ENCODE measurements at regions of chr5 and their contacts with region 1.

Region 1: DNA sequence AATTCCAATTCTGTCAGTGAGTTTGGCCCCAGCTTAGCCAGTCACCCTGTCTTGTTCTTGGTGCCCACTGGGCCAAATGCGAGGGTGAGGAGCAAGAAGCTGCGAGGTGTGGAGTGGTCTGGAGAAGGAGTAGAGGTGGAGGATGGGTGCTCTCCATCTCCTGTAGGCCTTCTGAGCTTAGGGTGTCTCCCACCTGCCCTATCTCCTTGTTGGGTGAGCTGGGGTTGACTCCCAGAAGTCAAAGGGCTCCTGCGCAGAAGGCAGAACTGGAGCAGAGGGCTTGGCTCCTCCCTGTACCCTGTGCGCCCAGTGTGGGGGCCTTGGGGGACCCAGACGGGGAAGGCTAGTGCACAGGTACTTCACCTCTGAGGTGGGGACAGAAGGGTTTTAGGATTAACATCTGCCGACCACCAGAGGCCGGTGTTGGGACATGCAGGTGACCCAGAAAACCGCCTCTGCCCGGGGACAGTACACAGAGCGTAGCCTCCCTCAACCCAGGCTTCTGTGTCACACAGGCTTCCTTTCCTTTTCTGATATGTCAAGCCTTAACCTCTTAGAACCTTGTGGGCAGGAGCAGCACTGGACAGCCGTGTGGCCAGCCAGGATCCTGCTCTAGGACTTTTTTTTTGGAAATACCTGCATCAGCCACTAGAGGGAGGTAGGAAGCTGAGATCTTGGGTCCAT is 16.9 kb downstream of the IL5 start:
- H3K4me3 ChIP-seq: peak overlapping the region; percentile 32
- H3K27ac ChIP-seq: no peak overlapping the region
- H3K4me1 ChIP-seq: no peaks in the 10 kb centered on the region
- CTCF ChIP-seq: peak; percentile 91

Region 2: GRCh38 chr5:132497488-132497997 is 28.9 kb before region 1 on chr5:
- CTCF ChIA-PET with region 1: no interaction called
- POLR2A ChIA-PET with region 1: no interaction called
- H3K4me3 ChIP-seq: no peak overlapping the region
- H3K27ac ChIP-seq: no peak overlapping the region; the same call in 1 of the 2 replicates
- H3K4me1 ChIP-seq: peaks cover 4% of the 10 kb centered on the region
- CTCF ChIP-seq: no peak

Region 3: DNA sequence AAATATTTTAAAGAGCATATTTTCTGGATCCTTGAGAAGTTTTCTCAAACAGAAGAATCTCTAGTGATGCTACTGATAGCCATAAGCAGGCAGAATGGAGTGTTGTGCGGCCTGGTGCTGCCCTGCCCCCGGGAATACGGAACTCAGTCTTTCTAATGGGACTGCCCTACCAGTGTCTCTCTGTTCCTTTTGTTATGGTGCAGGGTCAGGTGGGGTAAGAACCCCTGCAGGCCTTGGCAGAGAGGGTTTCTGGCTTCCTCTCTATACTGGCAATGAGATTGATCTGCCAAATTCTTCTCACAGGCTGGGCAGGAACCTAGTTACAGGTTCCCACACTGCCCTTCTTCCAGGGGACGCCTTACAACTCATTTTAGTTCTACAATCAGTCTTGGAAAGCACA is 14.3 kb after region 1 on chr5:
- CTCF ChIA-PET with region 1: interaction called, 20 read pairs
- POLR2A ChIA-PET with region 1: no interaction called
- H3K4me3 ChIP-seq: no peak overlapping the region
- H3K27ac ChIP-seq: no peak overlapping the region
- H3K4me1 ChIP-seq: no peaks in the 10 kb centered on the region
- CTCF ChIP-seq: no peak

Region 4: GRCh38 chr5:132546108-132546507 is 19.7 kb after region 1 on chr5:
- CTCF ChIA-PET with region 1: interaction called, 17 read pairs
- POLR2A ChIA-PET with region 1: no interaction called
- H3K4me3 ChIP-seq: no peak overlapping the region
- H3K27ac ChIP-seq: no peak overlapping the region
- H3K4me1 ChIP-seq: no peaks in the 10 kb centered on the region
- CTCF ChIP-seq: no peak

Region 5: GRCh38 chr5:132591145-132591544 is 64.7 kb after region 1 on chr5:
- CTCF ChIA-PET with region 1: interaction called, 10 read pairs
- POLR2A ChIA-PET with region 1: no interaction called
- H3K4me3 ChIP-seq: no peak overlapping the region
- H3K27ac ChIP-seq: no peak overlapping the region
- H3K4me1 ChIP-seq: no peaks in the 10 kb centered on the region
- CTCF ChIP-seq: no peak

Region 6: DNA sequence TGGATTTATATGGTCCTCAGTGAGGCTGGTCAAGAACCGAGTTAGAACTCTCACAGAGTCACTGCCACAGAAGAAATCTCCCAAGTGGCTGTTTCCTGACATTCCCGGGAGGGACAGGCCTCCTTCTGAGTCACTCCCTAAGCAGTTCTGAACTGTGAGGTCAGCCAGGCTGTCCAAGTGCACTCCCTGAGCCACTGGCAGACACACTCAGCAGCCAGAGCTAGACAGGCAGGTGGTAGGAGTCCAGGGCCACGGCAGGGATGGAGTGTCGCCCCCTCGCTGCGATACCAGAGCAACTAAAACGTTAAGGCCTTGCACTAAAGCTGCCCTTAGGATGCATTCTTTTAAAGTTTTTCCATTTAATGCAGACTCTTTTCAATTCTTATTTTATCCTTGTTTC is 150.8 kb after region 1 on chr5:
- CTCF ChIA-PET with region 1: interaction called, 14 read pairs
- POLR2A ChIA-PET with region 1: no interaction called
- H3K4me3 ChIP-seq: no peak overlapping the region
- H3K27ac ChIP-seq: no peak overlapping the region
- H3K4me1 ChIP-seq: no peaks in the 10 kb centered on the region
- CTCF ChIP-seq: no peak

Region 7: DNA sequence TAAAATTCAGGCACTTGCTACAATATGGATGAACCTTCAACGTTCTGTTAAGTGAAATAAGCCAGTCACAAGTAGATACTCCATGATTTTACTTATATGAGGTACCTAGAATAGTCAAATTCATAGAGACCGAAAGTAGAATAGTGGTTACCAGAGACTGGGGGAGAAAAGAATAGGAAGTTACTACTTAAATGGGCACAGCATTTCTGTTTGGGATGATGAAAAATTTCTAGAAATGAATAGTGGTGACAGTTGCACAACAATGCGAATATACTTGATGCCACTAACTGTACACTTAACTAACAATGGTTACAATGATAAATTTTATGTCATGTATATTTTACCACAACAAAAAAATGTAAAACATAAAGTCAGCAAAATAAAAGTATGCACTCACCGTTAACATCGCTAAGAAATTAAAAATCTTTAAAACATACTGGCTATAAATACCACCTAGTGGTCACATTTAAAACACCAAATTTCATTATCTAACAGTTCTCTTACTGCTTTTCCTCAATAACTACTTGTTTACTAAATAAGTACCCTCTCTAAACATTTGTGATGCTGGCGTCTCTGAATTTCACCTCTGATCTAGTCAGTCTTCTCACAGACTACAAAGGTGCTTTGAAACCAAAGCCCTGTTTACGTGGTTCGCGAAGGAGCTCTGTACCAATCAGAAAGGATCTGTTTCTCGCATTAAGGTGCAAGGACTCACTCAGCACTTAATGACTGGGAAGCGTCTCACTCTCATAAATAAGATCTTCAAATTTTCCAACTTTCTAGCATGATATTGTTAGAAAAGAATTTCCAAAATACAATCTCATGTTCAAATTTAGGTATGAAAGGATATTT is 188.2 kb after region 1 on chr5:
- CTCF ChIA-PET with region 1: interaction called, 17 read pairs
- POLR2A ChIA-PET with region 1: no interaction called
- H3K4me3 ChIP-seq: no peak overlapping the region
- H3K27ac ChIP-seq: no peak overlapping the region
- H3K4me1 ChIP-seq: no peaks in the 10 kb centered on the region
- CTCF ChIP-seq: no peak

Measured in HEK293 (cell line).